GM23248 (cell line): ENCODE measurements at regions of chr5 and their contacts with region 1.

Region 1: DNA sequence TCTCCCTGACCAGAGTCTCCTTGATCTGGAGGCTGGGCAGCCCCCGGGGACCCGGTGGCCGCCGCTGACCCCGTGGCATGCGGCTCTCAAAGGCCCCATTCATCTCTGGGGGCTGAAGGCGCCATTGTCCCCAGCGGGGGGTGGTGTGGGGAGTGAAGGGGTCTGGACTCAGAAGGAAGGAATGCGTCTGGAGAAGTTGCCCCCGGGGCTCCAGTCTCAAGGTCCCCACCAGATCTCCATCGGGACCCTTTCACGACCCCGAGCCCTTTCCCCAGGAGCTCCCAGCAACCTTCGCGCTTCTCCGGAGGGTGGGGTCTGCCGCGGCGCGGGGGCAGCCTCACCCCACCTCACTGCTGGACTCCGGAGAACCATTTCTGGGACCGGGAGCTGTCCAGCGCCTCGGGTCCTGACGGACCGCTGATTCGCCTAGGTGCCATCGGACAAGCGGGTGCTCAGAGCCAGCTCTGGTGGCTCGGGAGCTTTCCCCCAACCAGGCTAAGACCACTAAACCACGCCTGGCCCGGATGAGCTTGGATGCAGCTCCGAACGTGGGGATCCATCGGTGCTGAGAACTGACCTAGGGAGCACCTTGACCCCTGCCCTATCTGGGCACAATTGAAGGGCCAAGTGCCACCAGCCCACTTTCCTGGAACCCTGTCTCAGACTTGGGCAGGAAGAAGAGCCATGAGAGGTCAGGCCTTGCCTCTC is 5.1 kb upstream of the PCDH1 start:
- DNase-seq: peak; percentile 63
- H3K4me3 ChIP-seq: no peak overlapping the region
- H3K27ac ChIP-seq: no peak overlapping the region
- H3K4me1 ChIP-seq: no peaks in the 10 kb centered on the region
- H3K27me3 ChIP-seq: peaks cover 62% of the 10 kb centered on the region

Region 2: DNA sequence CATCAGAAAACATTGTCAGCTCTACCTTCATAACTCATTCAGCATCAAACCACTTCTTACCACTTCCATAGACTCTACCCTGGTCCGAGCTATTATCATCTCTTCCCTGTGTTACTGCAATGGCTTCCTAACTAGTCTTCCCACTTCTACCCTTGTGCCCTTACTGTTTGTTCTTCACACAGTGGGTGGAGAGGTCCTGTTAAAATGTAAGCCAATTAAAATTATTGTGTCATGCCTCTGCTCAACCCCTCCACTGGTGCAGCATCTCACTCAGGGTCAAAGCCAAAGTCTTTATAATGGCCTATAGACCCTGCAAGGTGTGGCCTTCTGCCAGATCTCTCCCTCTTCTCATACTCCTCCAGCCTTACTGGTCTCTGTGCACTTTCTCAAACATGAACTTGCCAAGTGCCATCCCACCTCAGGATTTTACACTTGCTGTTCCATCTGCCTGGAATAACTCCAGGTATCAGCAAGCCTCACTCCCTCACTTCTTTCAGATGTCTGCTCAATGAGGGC is 178.5 kb before region 1 on chr5:
- in situ Hi-C with region 1: loop called (anchors 5 kb)
- DNase-seq: no peak
- H3K4me3 ChIP-seq: no peak overlapping the region
- H3K27ac ChIP-seq: no peak overlapping the region
- H3K4me1 ChIP-seq: 0 out of 2 replicates have a peak, but pooled peaks cover 4% of the 10 kb centered on the region
- H3K27me3 ChIP-seq: peaks cover 75% of the 10 kb centered on the region